Activated CD8-positive, alpha-beta T cell treated with anti-CD3 and anti-CD28 coated beads, Interleukin-2, amount 10 ng/mL, durations not matched to agents 7 days and 5 days (primary cell): ENCODE measurements at regions of chr12 and their contacts with region 1.

Region 1: DNA sequence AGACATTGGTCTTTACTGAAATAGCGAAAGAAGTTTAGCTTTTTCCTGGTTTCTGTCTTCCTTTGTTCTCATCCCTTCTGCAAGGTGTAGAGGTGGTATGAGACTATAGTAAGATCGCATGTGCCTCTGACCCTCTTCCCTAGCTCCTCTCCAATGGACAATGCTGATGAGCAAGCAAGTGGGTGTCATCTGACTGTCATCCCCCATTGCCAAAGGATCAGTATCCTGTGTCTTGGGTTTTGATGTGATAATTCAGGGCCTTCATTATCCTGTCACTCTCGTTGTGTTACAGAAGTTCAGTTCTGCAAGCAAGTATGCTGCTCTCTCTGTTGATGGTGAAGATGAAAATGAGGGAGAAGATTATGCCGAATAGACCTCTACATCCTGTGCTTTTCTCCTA is 10.0 kb upstream of the TNS2 start:
- DNase-seq: no peak
- ATAC-seq: no peak
- H3K4me3 Mint-ChIP-seq: no peak overlapping the region
- H3K27ac Mint-ChIP-seq: peak overlapping the region; percentile 50
- H3K4me1 Mint-ChIP-seq: peaks cover 33% of the 10 kb centered on the region
- H3K27me3 Mint-ChIP-seq: no peaks in the 10 kb centered on the region

Region 2: DNA sequence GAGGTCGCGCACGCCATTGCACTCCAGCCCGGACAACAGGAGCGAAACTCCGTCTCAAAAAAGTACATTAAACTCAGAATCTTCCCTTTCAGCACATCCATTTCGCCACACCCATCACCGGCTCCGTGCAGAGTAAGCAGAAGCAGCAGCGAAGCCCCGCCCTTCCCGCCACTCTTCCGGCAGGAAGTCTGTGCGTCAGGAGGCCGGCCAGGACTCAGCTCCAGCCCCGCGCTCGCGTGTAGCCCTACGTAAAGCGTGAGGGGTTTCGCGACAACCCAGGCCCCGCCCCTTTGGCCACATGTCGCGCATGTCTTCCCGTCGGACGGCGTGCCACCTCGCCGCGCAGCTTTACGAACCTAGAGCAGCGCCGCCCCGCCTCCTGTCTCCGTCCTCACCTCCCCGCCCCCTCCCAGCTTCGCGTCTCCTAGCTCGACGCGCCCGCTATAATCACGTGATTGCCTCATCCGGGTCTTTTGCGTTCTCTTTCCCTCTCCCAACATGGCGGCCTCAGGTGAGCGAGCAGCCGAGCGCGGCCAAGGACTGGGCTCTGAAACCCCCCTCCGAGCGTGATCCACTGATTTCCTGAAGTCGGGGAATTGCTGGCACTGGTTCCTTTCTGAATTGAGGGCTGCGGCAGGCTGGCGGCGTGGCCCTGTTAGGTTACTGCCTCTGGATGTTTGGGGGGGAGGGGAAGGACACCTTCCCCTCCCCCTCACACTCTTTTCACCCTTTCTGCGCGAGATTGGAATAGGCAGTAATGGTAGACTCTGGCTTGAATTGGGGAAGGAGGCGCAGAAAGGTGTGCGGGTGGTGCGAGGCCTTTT is 33.7 kb before region 1 on chr12 and contains the start of gene EIF4B:
- CTCF ChIA-PET with region 1: interaction called, 18 read pairs
- POLR2A ChIA-PET with region 1: interaction called, 7 read pairs
- DNase-seq: peak; percentile 100
- ATAC-seq: peak; percentile 97
- H3K4me3 Mint-ChIP-seq: peak within 1 kb of the TSS; percentile 97
- H3K27ac Mint-ChIP-seq: peak within 1 kb of the TSS; percentile 98
- H3K4me1 Mint-ChIP-seq: peaks cover 47% of the 10 kb centered on the region
- H3K27me3 Mint-ChIP-seq: peaks cover 2% of the 10 kb centered on the region
- total RNA-seq, gene EIF4B: 352 to 353 TPM

Region 3: DNA sequence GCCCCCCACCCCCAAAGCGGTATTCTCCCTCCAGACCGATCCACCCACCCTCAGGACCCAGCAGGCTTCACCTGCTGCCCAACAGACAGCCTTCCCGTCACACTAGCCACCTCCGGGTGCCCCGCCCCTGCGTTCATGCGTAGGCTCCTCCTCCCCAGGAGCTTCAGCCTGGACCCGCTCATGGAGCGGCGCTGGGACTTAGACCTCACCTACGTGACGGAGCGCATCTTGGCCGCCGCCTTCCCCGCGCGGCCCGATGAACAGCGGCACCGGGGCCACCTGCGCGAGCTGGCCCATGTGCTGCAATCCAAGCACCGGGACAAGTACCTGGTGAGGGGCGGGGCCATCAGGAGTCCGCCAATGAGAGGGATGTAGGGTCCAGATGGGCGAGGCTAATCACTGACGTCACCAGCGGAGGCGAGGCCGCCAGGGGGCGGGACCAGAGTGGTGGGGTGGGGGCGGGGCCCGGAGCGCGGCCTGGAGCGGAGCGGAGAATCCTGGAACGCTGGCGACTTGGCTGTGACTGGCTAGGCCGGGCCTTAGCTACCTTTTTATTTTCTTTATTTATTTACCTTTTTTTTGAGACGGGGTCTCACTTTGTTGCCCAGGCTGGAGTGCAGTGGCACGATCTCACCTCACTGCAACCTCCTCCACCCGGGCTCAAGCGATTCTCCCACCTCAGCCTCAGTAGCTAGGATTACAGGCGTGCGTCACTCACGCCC is 14.4 kb after region 1 on chr12:
- CTCF ChIA-PET with region 1: interaction called, 13 read pairs
- POLR2A ChIA-PET with region 1: interaction called, 3 read pairs
- DNase-seq: peak; percentile 96
- ATAC-seq: peak; percentile 94
- H3K4me3 Mint-ChIP-seq: peak overlapping the region; percentile 94
- H3K27ac Mint-ChIP-seq: peak overlapping the region; percentile 94
- H3K4me1 Mint-ChIP-seq: peaks cover 17% of the 10 kb centered on the region
- H3K27me3 Mint-ChIP-seq: no peaks in the 10 kb centered on the region